WTC11 (cell line): ENCODE measurements at regions of chr11 and their contacts with region 1.

Region 1: GRCh38 chr11:116641561-116642045 is 131.2 kb downstream of the BUD13 start:
- DNase-seq: peak; percentile 85
- ATAC-seq: peak; percentile 93
- H3K4me3 Mint-ChIP-seq: no peak overlapping the region
- H3K27ac Mint-ChIP-seq: no peak overlapping the region
- H3K4me1 Mint-ChIP-seq: peaks cover 6% of the 10 kb centered on the region
- H3K27me3 Mint-ChIP-seq: no peaks in the 10 kb centered on the region; the same call in 1 of the 2 replicates
- CTCF ChIP-seq: peak; percentile 80

Region 2: DNA sequence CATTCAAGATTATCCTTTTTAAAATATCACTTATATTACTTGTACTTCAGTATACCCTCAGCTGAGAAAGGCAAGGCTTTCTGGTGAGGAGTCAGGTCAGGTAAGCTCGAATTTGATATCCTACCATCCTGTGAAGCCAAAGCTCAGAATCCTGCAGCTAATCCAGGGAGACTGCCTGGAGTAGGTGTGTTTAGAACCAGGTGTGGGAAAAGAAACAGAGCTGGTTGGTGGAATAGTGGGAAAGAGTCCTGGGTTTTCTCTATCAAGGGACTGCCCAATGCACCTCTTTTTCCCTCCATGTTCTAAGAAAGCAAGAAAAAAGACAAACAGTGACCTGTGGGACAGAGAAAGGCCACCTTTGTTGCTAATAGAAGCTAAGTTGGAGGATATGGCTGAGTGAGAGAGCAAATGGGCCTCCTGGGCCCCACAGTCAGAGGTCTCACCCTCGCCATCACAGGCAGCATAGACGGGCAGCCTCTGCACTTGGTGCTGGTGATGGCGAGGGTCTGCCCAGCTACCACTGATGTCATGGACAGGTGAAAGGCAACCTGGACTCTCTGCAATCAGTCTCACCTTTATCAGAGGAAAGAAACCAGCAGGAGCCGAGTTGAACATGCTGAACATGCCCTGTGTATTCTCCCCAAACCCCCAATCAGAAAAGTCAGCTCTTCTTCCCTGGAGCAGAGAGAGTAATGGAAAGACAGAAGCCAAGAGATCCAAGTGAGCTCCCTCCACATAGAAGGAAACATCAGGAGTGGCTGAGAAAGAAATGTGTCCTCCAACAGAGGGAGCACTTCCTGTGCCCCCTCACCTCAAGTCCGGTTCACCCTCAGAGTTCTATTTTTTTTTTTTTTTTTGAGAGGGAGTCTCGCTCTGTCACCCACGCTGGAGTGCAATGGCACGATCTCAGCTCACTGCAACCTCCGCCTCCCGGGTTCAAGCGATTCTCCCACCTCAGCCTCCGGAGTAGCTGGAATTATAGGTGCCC is 360.1 kb before region 1 on chr11:
- CTCF ChIA-PET with region 1: interaction called, 24 read pairs
- POLR2A ChIA-PET with region 1: no interaction called
- DNase-seq: no peak
- ATAC-seq: peak; percentile 66
- H3K4me3 Mint-ChIP-seq: no peak overlapping the region
- H3K27ac Mint-ChIP-seq: no peak overlapping the region
- H3K4me1 Mint-ChIP-seq: no peaks in the 10 kb centered on the region; the same call in 1 of the 2 replicates
- H3K27me3 Mint-ChIP-seq: no peaks in the 10 kb centered on the region
- CTCF ChIP-seq: no peak

Region 3: GRCh38 chr11:116513894-116514293 is 127.7 kb before region 1 on chr11:
- CTCF ChIA-PET with region 1: interaction called, 57 read pairs
- POLR2A ChIA-PET with region 1: no interaction called
- DNase-seq: peak; percentile 87
- ATAC-seq: peak; percentile 79
- H3K4me3 Mint-ChIP-seq: no peak overlapping the region
- H3K27ac Mint-ChIP-seq: no peak overlapping the region
- H3K4me1 Mint-ChIP-seq: peaks cover 29% of the 10 kb centered on the region
- H3K27me3 Mint-ChIP-seq: peaks cover under 1% of the 10 kb centered on the region
- CTCF ChIP-seq: peak; percentile 58

Region 4: GRCh38 chr11:116558504-116559211 is 82.9 kb before region 1 on chr11:
- CTCF ChIA-PET with region 1: interaction called, 14 read pairs
- POLR2A ChIA-PET with region 1: no interaction called
- DNase-seq: no peak
- ATAC-seq: no peak
- H3K4me3 Mint-ChIP-seq: no peak overlapping the region
- H3K27ac Mint-ChIP-seq: no peak overlapping the region
- H3K4me1 Mint-ChIP-seq: peaks cover 3% of the 10 kb centered on the region; the same call in 1 of the 2 replicates
- H3K27me3 Mint-ChIP-seq: peaks cover 14% of the 10 kb centered on the region
- CTCF ChIP-seq: no peak

Region 5: GRCh38 chr11:116691771-116692177 is 50.2 kb after region 1 on chr11:
- CTCF ChIA-PET with region 1: interaction called, 27 read pairs
- POLR2A ChIA-PET with region 1: no interaction called
- DNase-seq: peak; percentile 85
- ATAC-seq: peak; percentile 50
- H3K4me3 Mint-ChIP-seq: no peak overlapping the region
- H3K27ac Mint-ChIP-seq: no peak overlapping the region
- H3K4me1 Mint-ChIP-seq: peaks cover 29% of the 10 kb centered on the region
- H3K27me3 Mint-ChIP-seq: no peaks in the 10 kb centered on the region
- CTCF ChIP-seq: peak; percentile 89